ENCODE measurements at regions of chr7 and their contacts with region 1.

Region 1: GRCh38 chr7:79854621-79855020 is 280.0 kb upstream of the GNAI1 start:
- DNase-seq: no peak
- ATAC-seq: no peak
- H3K4me3 ChIP-seq: no peak overlapping the region
- H3K4me3 Mint-ChIP-seq: no peak overlapping the region
- H3K27ac ChIP-seq: no peak overlapping the region
- H3K27ac Mint-ChIP-seq: no peak overlapping the region
- H3K4me1 ChIP-seq: no peaks in the 10 kb centered on the region
- H3K4me1 Mint-ChIP-seq: no peaks in the 10 kb centered on the region
- H3K27me3 ChIP-seq: no peaks in the 10 kb centered on the region
- H3K27me3 Mint-ChIP-seq: no peaks in the 10 kb centered on the region

Region 2: GRCh38 chr7:79837915-79838314 is 16.7 kb before region 1 on chr7:
- CTCF ChIA-PET with region 1: no interaction called
- POLR2A ChIA-PET with region 1: no interaction called
- intact Hi-C with region 1: loop called in 1 of 2 experiments (anchors 1 kb)
- DNase-seq: no peak
- ATAC-seq: no peak
- H3K4me3 ChIP-seq: no peak overlapping the region
- H3K4me3 Mint-ChIP-seq: no peak overlapping the region
- H3K27ac ChIP-seq: no peak overlapping the region
- H3K27ac Mint-ChIP-seq: no peak overlapping the region
- H3K4me1 ChIP-seq: no peaks in the 10 kb centered on the region
- H3K4me1 Mint-ChIP-seq: no peaks in the 10 kb centered on the region
- H3K27me3 ChIP-seq: no peaks in the 10 kb centered on the region
- H3K27me3 Mint-ChIP-seq: no peaks in the 10 kb centered on the region

Region 3: DNA sequence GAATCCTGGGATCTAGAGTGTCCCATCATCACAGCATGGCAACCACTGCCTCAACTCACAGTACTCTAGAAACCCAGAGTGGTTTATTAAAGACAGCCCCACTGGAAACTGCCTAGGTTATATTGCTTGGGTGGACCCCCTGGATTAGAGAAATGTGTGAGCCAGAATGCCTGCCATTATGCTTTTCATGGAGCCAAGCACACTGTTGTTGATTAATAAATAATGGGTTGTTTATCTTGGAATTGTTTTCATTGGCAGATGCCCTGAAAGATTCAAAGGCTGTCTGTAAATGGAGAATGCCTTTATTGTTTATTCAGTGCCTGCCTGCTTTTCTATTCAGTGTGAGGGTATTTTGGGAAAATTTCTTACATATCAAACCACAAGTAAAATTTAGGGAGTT is 332.1 kb after region 1 on chr7:
- CTCF ChIA-PET with region 1: no interaction called
- POLR2A ChIA-PET with region 1: no interaction called
- intact Hi-C with region 1: no loop called
- DNase-seq: no peak
- ATAC-seq: no peak
- H3K4me3 ChIP-seq: no peak overlapping the region
- H3K4me3 Mint-ChIP-seq: no peak overlapping the region
- H3K27ac ChIP-seq: no peak overlapping the region
- H3K27ac Mint-ChIP-seq: no peak overlapping the region
- H3K4me1 ChIP-seq: no peaks in the 10 kb centered on the region
- H3K4me1 Mint-ChIP-seq: peaks cover 0 to 18% (median 4%) of the 10 kb centered on the region in 7 donors
- H3K27me3 ChIP-seq: no peaks in the 10 kb centered on the region
- H3K27me3 Mint-ChIP-seq: no peaks in the 10 kb centered on the region

Measured in naive thymus-derived CD4-positive, alpha-beta T cell (primary cell).